GM12878 (cell line): ENCODE measurements at regions of chr10 and their contacts with region 1.

Region 1: GRCh38 chr10:123402656-123403055 is 248.5 kb downstream of the BUB3 start:
- DNase-seq: peak; percentile 97
- ATAC-seq: peak; percentile 80
- H3K4me3 ChIP-seq: peak overlapping the region; percentile 18; the same call in 1 of the 2 replicates
- H3K27ac ChIP-seq: peak overlapping the region; percentile 97
- H3K4me1 ChIP-seq: peaks cover 56% of the 10 kb centered on the region
- H3K27me3 ChIP-seq: no peaks in the 10 kb centered on the region
- CTCF ChIP-seq: no peak
- EP300 ChIP-seq: peak; percentile 91 to 94
- POLR2A ChIP-seq: peak; percentile 55
- RAD21 ChIP-seq: peak; percentile 30

Region 2: GRCh38 chr10:123160311-123160980 is 242.2 kb before region 1 on chr10:
- CTCF ChIA-PET with region 1: no interaction called
- POLR2A ChIA-PET with region 1: interaction called, 3 read pairs
- RAD21 ChIA-PET with region 1: no interaction called
- SMC1A ChIA-PET with region 1: interaction called, 10 read pairs
- in situ Hi-C with region 1: no loop called
- intact Hi-C with region 1: no loop called
- DNase-seq: no peak
- ATAC-seq: peak; percentile 31; the same call in 1 of the 3 replicates
- H3K4me3 ChIP-seq: peak overlapping the region; percentile 39
- H3K27ac ChIP-seq: no peak overlapping the region
- H3K4me1 ChIP-seq: peaks cover 9% of the 10 kb centered on the region; the same call in 1 of the 2 replicates
- H3K27me3 ChIP-seq: no peaks in the 10 kb centered on the region
- CTCF ChIP-seq: no peak
- EP300 ChIP-seq: no peak
- POLR2A ChIP-seq: no peak
- RAD21 ChIP-seq: no peak

Region 3: GRCh38 chr10:123413353-123413752 is 10.7 kb after region 1 on chr10:
- CTCF ChIA-PET with region 1: no interaction called
- POLR2A ChIA-PET with region 1: interaction called, 3 read pairs
- RAD21 ChIA-PET with region 1: interaction called, 11 read pairs
- SMC1A ChIA-PET with region 1: interaction called, 4 read pairs
- in situ Hi-C with region 1: no loop called
- intact Hi-C with region 1: no loop called
- DNase-seq: no peak
- ATAC-seq: peak; percentile 31; the same call in 1 of the 3 replicates
- H3K4me3 ChIP-seq: no peak overlapping the region
- H3K27ac ChIP-seq: no peak overlapping the region
- H3K4me1 ChIP-seq: no peaks in the 10 kb centered on the region
- H3K27me3 ChIP-seq: no peaks in the 10 kb centered on the region
- CTCF ChIP-seq: peak in 2 of 3 experiments; percentile 27 to 34; a peak in 4 of 6 replicates
- EP300 ChIP-seq: no peak
- POLR2A ChIP-seq: no peak
- RAD21 ChIP-seq: peak; percentile 59

Region 4: GRCh38 chr10:123442901-123443300 is 40.2 kb after region 1 on chr10:
- CTCF ChIA-PET with region 1: interaction called, 3 read pairs
- POLR2A ChIA-PET with region 1: interaction called, 3 read pairs
- RAD21 ChIA-PET with region 1: interaction called, 3 read pairs
- SMC1A ChIA-PET with region 1: interaction called, 7 read pairs
- in situ Hi-C with region 1: no loop called
- intact Hi-C with region 1: loop called (anchors 2 kb)
- DNase-seq: peak; percentile 42
- ATAC-seq: peak; percentile 97
- H3K4me3 ChIP-seq: no peak overlapping the region
- H3K27ac ChIP-seq: peak overlapping the region; percentile 37
- H3K4me1 ChIP-seq: peaks cover 35% of the 10 kb centered on the region
- H3K27me3 ChIP-seq: no peaks in the 10 kb centered on the region
- CTCF ChIP-seq: no peak
- EP300 ChIP-seq: no peak
- POLR2A ChIP-seq: no peak
- RAD21 ChIP-seq: no peak

Region 5: DNA sequence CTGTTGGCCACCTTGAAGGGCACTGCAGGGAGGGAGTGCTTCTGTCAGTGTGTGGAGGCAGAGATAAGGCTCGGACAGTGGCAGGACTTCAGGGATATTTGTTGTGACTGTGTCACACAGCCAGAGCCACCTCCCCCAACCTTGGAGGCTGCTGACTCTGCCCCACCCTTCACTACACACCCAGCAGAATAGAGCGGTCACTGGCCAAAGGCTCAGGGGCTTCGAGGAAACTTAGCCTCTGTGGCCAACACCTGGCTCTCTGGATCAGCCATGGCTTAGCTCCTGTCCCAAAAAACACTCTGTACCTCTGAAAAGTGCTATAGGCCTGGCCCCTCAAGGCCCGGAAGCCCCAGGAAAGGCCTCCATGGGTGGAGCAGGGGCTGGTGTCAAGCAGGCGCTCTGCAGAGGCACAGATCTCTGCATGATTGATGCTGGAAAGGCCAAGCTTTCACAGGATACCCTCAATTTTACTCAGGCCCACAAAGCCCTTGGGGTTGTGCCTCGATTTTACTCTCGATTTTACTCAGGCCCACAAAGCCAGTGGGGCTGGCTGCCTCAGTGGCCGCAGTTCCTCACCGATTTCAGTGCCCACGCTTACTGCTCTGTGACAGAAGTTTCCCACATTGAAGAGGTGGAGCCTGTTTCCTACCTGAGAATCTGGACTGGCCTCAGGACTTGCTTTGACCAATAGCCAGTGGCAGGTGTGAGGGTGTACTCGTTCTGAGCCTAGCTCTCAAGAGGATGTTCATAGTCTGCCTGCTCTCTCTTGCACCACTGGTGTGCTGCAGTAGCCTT is 150.3 kb after region 1 on chr10:
- CTCF ChIA-PET with region 1: no interaction called
- POLR2A ChIA-PET with region 1: no interaction called
- RAD21 ChIA-PET with region 1: interaction called, 17 read pairs
- SMC1A ChIA-PET with region 1: interaction called, 16 read pairs
- in situ Hi-C with region 1: no loop called
- intact Hi-C with region 1: loop called (anchors 1 kb)
- DNase-seq: peak; percentile 81
- ATAC-seq: peak; percentile 84
- H3K4me3 ChIP-seq: 0 out of 2 replicates have a peak overlapping the region, but pooled peaks have one; percentile 2
- H3K27ac ChIP-seq: peak overlapping the region; percentile 85
- H3K4me1 ChIP-seq: peaks cover 74% of the 10 kb centered on the region
- H3K27me3 ChIP-seq: no peaks in the 10 kb centered on the region
- CTCF ChIP-seq: no peak
- EP300 ChIP-seq: peak; percentile 42 to 51; a peak in 2 of 4 replicates
- POLR2A ChIP-seq: 0 out of 2 replicates have a peak, but pooled peaks have one; percentile 38
- RAD21 ChIP-seq: no peak

Region 6: GRCh38 chr10:124221356-124222317 is 819.0 kb after region 1 on chr10:
- CTCF ChIA-PET with region 1: no interaction called
- POLR2A ChIA-PET with region 1: no interaction called
- RAD21 ChIA-PET with region 1: no interaction called
- SMC1A ChIA-PET with region 1: no interaction called
- in situ Hi-C with region 1: no loop called
- intact Hi-C with region 1: loop called (anchors 5 kb)
- DNase-seq: peak; percentile 83
- ATAC-seq: peak; percentile 90
- H3K4me3 ChIP-seq: peak overlapping the region; percentile 43; the same call in 1 of the 2 replicates
- H3K27ac ChIP-seq: peak overlapping the region; percentile 81
- H3K4me1 ChIP-seq: peaks cover 31% of the 10 kb centered on the region
- H3K27me3 ChIP-seq: no peaks in the 10 kb centered on the region
- CTCF ChIP-seq: no peak
- EP300 ChIP-seq: peak; percentile 88 to 90; a peak in 3 of 4 replicates
- POLR2A ChIP-seq: 0 out of 2 replicates have a peak, but pooled peaks have one; percentile 25
- RAD21 ChIP-seq: no peak

Region 7: DNA sequence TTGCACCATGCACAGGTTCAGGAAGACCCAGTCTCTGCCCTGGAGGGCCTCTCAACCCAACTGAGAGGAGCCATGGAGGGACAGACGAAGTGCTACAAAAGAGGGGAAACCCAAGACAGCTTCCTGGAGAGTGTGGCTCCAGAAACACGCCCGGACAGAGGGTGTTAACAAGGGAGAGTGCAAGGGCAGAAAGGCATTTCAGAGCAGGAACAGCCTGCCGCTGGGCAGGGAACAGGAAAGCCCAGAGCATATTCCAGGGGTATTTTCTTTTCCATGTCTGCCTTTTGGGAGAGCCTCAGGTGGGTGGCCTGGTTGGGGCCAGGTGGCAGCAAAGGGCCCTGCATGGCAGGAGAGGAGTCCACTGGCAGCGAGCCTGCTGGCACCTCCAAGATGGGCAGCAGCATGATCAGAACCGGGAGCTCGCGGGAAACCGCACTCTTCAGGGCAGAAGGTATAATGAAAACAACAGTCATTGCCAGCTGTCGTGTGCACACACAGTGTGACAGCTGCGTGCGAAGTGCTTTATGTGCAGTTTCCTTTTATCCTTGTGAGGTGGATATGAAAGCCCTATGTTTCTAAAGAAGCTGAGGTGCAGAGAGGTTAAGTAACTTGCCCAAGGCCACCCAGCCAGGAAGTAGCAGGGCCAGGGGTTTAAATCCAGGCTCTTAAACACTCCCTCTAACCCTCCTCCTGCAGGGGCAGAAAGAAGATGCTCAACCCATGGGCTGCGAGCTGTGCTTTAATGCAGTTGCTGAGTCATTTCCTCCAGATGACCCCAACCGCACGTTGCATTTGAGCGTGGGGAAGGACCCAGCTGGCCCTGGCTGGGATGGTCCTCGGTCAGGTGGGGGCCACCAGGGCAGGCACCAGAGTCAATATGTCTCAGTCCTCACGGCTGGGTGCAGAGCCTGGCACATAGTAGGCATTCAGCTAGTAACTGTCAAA is 887.5 kb after region 1 on chr10:
- CTCF ChIA-PET with region 1: no interaction called
- POLR2A ChIA-PET with region 1: no interaction called
- RAD21 ChIA-PET with region 1: no interaction called
- SMC1A ChIA-PET with region 1: no interaction called
- in situ Hi-C with region 1: loop called (anchors 10 kb)
- intact Hi-C with region 1: no loop called
- DNase-seq: peak; percentile 80
- ATAC-seq: peak; percentile 76
- H3K4me3 ChIP-seq: no peak overlapping the region
- H3K27ac ChIP-seq: peak overlapping the region; percentile 68
- H3K4me1 ChIP-seq: peaks cover 55% of the 10 kb centered on the region
- H3K27me3 ChIP-seq: no peaks in the 10 kb centered on the region
- CTCF ChIP-seq: no peak
- EP300 ChIP-seq: peak; percentile 56 to 85
- POLR2A ChIP-seq: no peak
- RAD21 ChIP-seq: no peak